OCI-LY7 (cell line): ENCODE measurements at regions of chr5 and their contacts with region 1.

Region 1: DNA sequence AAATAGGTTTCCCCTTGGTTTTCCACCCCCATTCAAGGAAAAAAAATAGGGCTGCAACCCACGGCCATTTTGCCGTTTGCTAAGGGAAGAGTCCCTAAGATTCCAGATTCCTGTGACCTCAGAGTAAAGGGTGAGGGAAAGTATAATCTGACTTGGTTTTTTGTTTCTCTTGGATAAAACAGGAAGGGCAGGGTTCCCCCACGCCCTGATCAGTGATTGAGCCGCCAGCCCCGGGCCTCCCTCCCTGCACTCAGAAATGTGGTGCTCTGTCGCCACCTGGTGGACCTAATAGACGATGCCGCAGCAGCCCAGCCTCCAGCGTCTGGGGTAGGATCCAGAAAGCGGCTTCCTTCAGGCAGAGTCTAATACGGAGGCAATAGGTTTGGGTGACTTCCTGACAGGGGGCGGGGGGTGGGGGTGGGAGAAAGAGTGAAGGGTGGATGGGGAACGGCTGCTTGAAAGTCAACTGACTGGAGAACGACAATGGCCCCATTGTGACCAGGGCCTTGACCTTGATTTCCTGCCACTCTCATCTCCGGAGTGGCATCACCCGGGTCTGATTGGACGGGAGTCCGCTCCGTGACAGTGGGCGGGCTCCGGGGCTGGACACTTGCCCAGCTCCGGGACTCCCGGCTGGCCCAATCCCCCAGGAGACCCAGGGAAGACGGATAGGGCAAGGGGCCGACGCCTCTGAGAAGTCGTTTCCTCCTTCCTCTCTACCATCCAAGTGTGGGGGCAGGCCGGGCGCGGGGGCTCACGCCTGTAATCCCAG is 17.8 kb upstream of the CYSTM1 start:
- DNase-seq: peak; percentile 82
- H3K4me3 ChIP-seq: no peak overlapping the region
- H3K27ac ChIP-seq: no peak overlapping the region
- H3K4me1 ChIP-seq: peaks cover 11% of the 10 kb centered on the region
- CTCF ChIP-seq: peak; percentile 90

Region 2: DNA sequence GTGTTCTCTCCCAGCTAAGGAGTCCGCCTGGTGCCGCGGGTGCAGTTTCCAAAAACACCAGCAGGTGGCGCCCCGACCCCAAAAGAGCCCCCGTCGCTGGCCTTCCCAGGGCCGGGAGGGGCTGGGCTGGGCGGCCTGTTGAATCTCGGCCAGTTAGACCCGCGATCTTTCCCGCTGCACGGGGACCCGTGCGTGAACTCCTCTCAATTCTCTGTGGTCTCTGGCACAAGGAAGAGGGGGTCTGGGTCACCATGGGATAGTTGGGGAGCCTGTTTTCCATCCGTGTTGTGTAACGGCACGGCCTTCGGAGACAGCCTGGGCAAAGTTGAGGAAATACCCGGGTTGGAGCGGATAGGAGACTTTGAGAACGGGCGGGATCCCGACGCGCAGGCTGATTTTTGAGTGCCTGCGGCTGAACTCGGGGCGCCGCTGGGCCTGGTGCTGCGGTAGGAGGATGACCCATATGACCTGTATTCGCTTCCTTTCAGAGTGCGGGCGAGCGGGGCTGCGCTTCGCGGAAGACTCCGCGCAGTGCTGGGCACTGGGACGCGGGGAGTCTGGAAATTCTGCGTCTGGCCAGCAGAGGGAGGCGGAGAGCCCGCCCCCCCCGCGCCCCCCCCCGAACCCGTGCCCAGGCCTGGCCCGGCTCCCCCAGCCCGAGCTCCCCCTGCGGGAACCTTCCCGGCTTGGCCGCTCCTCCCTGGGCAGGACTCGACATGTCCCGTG is 369.5 kb before region 1 on chr5:
- CTCF ChIA-PET with region 1: no interaction called
- POLR2A ChIA-PET with region 1: no interaction called
- intact Hi-C with region 1: loop called (anchors 5 kb)
- DNase-seq: peak; percentile 67
- H3K4me3 ChIP-seq: peak overlapping the region; percentile 30
- H3K27ac ChIP-seq: no peak overlapping the region
- H3K4me1 ChIP-seq: no peaks in the 10 kb centered on the region
- CTCF ChIP-seq: peak; percentile 94

Region 3: GRCh38 chr5:139968547-139969261 is 188.5 kb before region 1 on chr5:
- CTCF ChIA-PET with region 1: no interaction called
- POLR2A ChIA-PET with region 1: no interaction called
- intact Hi-C with region 1: loop called (anchors 5 kb)
- DNase-seq: peak; percentile 78
- H3K4me3 ChIP-seq: no peak overlapping the region
- H3K27ac ChIP-seq: no peak overlapping the region
- H3K4me1 ChIP-seq: no peaks in the 10 kb centered on the region
- CTCF ChIP-seq: peak; percentile 98

Region 4: GRCh38 chr5:140073296-140073695 is 83.9 kb before region 1 on chr5:
- CTCF ChIA-PET with region 1: interaction called, 3 read pairs
- POLR2A ChIA-PET with region 1: interaction called, 4 read pairs
- intact Hi-C with region 1: loop called (anchors 1 kb)
- DNase-seq: peak; percentile 41
- H3K4me3 ChIP-seq: no peak overlapping the region
- H3K27ac ChIP-seq: no peak overlapping the region
- H3K4me1 ChIP-seq: no peaks in the 10 kb centered on the region
- CTCF ChIP-seq: peak; percentile 96

Region 5: DNA sequence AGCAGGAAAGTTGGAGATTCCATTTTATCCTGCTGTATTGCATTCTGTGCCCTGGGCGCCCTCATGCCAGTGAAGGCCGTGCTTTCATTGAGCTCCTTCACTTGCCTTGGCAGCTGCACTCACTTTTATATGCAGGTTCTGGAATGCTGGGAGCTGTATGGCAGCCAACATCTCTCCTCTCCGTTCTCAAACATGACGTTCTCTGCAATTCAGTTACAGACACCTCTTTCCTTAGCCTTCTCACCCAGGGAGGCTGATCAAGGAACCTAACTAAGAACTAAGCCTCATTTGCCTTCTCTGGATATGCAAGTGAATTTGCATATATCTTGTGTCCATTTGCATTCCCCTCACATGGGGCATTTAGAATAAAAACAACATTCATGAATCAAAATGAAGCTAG is 72.7 kb before region 1 on chr5:
- CTCF ChIA-PET with region 1: no interaction called
- POLR2A ChIA-PET with region 1: no interaction called
- intact Hi-C with region 1: no loop called
- DNase-seq: no peak
- H3K4me3 ChIP-seq: no peak overlapping the region
- H3K27ac ChIP-seq: no peak overlapping the region
- H3K4me1 ChIP-seq: no peaks in the 10 kb centered on the region
- CTCF ChIP-seq: no peak

Region 6: DNA sequence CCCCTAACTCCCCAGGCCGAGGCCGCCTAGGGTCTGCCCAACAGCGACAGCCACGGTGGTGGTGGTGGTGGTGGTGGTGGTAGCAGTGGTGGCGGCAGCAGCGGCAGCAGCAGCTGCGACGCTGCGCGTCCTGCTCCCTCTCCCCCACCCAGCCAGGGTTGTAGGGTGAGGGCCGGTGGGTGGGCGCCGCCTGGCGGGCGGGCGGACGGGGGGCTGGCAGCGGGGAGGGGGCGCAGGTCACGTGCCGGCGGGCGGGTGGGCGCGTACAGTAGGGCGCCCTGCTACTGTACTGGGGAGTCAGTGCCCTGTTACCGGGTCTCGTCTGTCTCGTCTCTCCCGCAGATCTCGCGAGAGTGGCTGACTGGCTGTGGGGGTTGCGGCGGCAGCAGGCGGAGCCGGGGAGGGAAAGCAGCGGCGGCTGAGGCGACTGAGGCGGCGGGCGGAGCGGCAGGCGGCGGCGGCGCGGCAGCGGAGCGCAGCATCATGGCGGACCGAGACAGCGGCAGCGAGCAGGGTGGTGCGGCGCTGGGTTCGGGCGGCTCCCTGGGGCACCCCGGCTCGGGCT is 43.4 kb before region 1 on chr5 and contains the start of gene PURA:
- CTCF ChIA-PET with region 1: no interaction called
- POLR2A ChIA-PET with region 1: interaction called, 4 read pairs
- intact Hi-C with region 1: loop called (anchors 2 kb)
- DNase-seq: peak; percentile 97
- H3K4me3 ChIP-seq: peak within 1 kb of the TSS; percentile 86
- H3K27ac ChIP-seq: peak within 1 kb of the TSS; percentile 68
- H3K4me1 ChIP-seq: peaks cover 74% of the 10 kb centered on the region
- CTCF ChIP-seq: peak; percentile 68
- total RNA-seq, gene PURA: 19.3 and 19.7 TPM in 2 replicates